ENCODE measurements at regions of chr3 and their contacts with region 1.

Region 1: DNA sequence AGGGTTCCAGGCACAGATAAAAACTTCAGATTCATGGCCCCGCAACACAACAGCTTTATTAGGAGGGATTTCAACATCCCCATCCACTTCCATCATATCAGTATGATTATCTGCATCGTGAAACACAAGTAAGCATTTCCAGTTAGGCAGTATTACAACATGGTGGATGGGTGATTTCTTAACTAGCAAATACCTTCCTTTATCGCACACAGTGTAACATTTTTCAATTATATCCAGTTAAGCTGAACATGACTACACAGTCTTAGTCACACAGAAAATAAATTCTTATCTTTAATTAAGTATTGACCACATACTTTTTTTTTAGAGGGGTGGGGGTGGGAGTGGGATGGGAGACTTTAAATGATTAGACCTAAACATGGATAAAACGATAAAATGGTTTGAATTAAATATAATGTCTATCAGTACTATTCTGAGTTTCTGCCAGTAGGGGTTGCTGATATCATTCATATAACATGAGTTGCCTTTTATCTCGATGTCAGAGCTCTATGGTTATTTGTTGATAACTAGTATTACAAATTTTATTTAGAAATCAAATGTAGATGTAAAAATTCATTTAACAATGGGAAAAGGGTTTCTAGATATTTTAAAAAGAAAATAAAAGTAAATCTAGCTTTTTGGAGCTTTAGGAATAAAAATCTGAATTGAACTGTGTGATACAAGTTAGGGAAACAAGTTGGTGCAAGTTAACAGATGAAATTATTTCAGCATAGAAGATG is 146.6 kb downstream of the TBL1XR1 start:
- DNase-seq: no peak
- ATAC-seq: peak; percentile 77
- H3K4me3 Mint-ChIP-seq: no peak overlapping the region
- H3K27ac Mint-ChIP-seq: peak overlapping the region; percentile 56
- H3K4me1 Mint-ChIP-seq: peaks cover 14% of the 10 kb centered on the region
- H3K27me3 Mint-ChIP-seq: no peaks in the 10 kb centered on the region
- CTCF ChIP-seq: peak; percentile 69

Region 2: GRCh38 chr3:176526225-176526624 is 524.4 kb before region 1 on chr3:
- CTCF ChIA-PET with region 1: no interaction called
- POLR2A ChIA-PET with region 1: no interaction called
- intact Hi-C with region 1: no loop called
- DNase-seq: no peak
- ATAC-seq: no peak
- H3K4me3 Mint-ChIP-seq: no peak overlapping the region
- H3K27ac Mint-ChIP-seq: no peak overlapping the region
- H3K4me1 Mint-ChIP-seq: no peaks in the 10 kb centered on the region
- H3K27me3 Mint-ChIP-seq: no peaks in the 10 kb centered on the region
- CTCF ChIP-seq: no peak

Region 3: DNA sequence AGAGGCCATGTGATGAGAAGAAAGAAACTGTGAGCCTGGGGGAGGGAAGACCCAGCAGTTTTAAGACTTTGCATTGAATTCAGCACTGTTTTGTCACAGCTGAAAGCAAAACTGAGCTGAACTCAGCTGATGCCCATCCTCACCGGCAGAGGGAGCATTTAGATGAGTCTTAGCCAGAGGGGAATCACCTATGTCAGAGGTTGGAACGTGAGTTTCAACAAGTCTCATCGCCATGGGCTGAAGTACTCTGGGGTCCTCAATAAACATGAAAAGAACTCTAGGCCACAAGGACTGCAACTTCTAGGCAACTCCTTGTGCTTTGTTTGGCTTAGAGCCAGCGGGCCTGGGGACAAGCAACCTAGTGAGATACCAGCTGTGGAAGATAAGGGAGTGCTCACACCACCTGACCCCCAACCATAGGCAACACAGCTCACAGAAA is 177.9 kb before region 1 on chr3:
- CTCF ChIA-PET with region 1: interaction called, 3 read pairs
- POLR2A ChIA-PET with region 1: no interaction called
- intact Hi-C with region 1: loop called (anchors 5 kb)
- DNase-seq: peak; percentile 27
- ATAC-seq: peak; percentile 82
- H3K4me3 Mint-ChIP-seq: no peak overlapping the region
- H3K27ac Mint-ChIP-seq: no peak overlapping the region
- H3K4me1 Mint-ChIP-seq: peaks cover 2% of the 10 kb centered on the region
- H3K27me3 Mint-ChIP-seq: peaks cover 5% of the 10 kb centered on the region
- CTCF ChIP-seq: no peak

Region 4: GRCh38 chr3:177314897-177315296 is 264.2 kb after region 1 on chr3:
- CTCF ChIA-PET with region 1: no interaction called
- POLR2A ChIA-PET with region 1: no interaction called
- intact Hi-C with region 1: loop called (anchors 5 kb)
- DNase-seq: no peak
- ATAC-seq: no peak
- H3K4me3 Mint-ChIP-seq: no peak overlapping the region
- H3K27ac Mint-ChIP-seq: no peak overlapping the region
- H3K4me1 Mint-ChIP-seq: peaks cover 36% of the 10 kb centered on the region
- H3K27me3 Mint-ChIP-seq: no peaks in the 10 kb centered on the region
- CTCF ChIP-seq: no peak

Region 5: DNA sequence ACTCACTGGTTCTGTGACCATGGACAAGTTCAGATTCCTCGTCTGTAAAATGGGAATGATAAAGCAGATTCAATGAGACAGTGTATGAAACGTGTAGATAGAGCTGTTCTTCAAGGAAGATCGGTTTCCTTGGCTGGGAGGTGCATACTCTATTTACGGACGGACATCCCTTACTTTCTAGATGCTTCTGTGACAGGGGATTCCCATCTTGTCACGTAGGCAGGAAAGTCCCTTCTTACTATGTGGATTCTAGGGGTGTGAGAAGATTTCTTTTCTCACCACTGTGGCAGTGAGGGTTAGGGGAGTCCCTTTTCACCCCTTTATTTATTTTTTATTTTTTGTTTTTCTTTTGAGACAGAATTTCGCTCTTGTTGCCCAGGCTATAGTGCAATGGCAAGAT is 327.5 kb after region 1 on chr3:
- CTCF ChIA-PET with region 1: interaction called, 13 read pairs
- POLR2A ChIA-PET with region 1: no interaction called
- intact Hi-C with region 1: loop called (anchors 1 kb)
- DNase-seq: no peak
- ATAC-seq: peak; percentile 63
- H3K4me3 Mint-ChIP-seq: peak overlapping the region; percentile 46
- H3K27ac Mint-ChIP-seq: peak overlapping the region; percentile 69
- H3K4me1 Mint-ChIP-seq: peaks cover 55% of the 10 kb centered on the region
- H3K27me3 Mint-ChIP-seq: no peaks in the 10 kb centered on the region
- CTCF ChIP-seq: no peak

Region 6: DNA sequence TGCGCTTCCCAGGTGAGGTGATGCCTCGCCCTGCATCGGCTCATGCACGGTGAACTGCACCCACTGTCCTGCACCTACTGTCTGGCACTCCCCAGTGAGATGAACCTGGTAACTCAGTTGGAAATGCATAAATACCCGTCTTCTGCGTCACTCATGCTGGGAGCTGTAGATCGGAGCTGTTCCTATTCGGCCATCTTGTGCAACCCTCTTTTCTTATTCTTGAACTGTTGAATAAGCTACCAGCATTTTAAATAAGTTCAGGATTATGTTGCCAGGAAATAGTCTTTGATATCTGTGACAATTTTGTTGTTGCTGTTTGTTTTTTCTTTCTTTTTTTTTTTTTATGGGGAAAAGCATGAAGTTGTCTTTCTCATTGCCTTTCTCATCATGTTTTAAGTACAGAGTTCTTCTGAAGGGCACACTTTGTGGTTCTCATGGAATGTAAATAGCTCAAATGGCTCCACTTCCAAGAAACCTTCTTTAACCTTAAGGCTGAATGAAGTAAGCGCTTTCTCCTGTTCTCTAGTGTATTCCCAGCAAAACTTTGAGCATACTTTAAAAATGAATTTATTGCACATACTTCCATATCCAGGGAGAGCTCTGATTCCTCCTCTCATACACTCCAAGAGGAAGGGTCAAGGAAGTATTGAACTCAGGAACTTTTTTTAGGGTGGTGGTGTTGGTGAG is 614.6 kb after region 1 on chr3:
- CTCF ChIA-PET with region 1: interaction called, 4 read pairs
- POLR2A ChIA-PET with region 1: no interaction called
- intact Hi-C with region 1: loop called (anchors 1 kb)
- DNase-seq: no peak
- ATAC-seq: no peak
- H3K4me3 Mint-ChIP-seq: no peak overlapping the region
- H3K27ac Mint-ChIP-seq: no peak overlapping the region
- H3K4me1 Mint-ChIP-seq: no peaks in the 10 kb centered on the region
- H3K27me3 Mint-ChIP-seq: no peaks in the 10 kb centered on the region
- CTCF ChIP-seq: no peak

Region 7: GRCh38 chr3:178385280-178385952 is 1334.7 kb after region 1 on chr3:
- CTCF ChIA-PET with region 1: interaction called, 9 read pairs
- POLR2A ChIA-PET with region 1: no interaction called
- intact Hi-C with region 1: loop called (anchors 1 kb)
- DNase-seq: no peak
- ATAC-seq: peak; percentile 28
- H3K4me3 Mint-ChIP-seq: no peak overlapping the region
- H3K27ac Mint-ChIP-seq: no peak overlapping the region
- H3K4me1 Mint-ChIP-seq: no peaks in the 10 kb centered on the region
- H3K27me3 Mint-ChIP-seq: no peaks in the 10 kb centered on the region
- CTCF ChIP-seq: peak; percentile 49

Measured in activated B cell treated with CpG ODN at 0.5 μM for 24 hours (primary cell).